IMR-90 (cell line): ENCODE measurements at regions of chr12 and their contacts with region 1.

Region 1: GRCh38 chr12:91058786-91059185 is 962 bp upstream of the KERA start:
- DNase-seq: no peak
- ATAC-seq: no peak
- H3K4me3 ChIP-seq: no peak overlapping the region
- H3K27ac ChIP-seq: no peak overlapping the region
- H3K4me1 ChIP-seq: no peaks in the 10 kb centered on the region
- H3K27me3 ChIP-seq: no peaks in the 10 kb centered on the region
- CTCF ChIP-seq: no peak
- POLR2A ChIP-seq: no peak
- RAD21 ChIP-seq: no peak

Region 2: DNA sequence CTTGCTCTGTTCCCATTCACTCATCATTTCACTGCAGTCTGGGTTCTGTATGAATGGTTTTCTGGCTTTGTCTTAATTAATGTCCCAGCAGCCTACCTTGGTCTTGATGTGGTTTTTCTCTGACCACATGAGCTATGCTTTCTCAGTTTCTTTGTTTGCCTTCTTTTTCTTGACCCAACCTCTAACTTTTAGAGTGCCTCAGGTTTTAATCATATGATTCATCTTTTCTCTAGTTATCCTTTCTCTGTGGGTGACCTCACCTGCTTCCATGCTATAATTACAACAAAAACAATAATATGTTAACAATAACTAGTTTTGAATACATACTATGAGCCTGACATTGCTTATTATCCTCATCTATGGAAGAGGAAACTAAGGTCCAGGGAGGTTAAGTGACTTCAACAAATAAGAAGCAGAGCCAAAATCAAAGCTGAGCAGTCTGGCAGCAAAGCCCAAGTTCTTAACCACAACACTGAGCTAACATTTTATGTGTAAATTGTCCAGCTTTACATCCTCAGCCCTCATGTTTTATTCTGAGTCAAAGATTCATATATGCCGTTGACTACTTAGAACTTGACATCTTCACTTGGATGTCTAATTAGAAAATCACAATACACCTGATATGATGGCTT is 49.4 kb before region 1 on chr12:
- CTCF ChIA-PET with region 1: no interaction called
- POLR2A ChIA-PET with region 1: no interaction called
- dilution Hi-C with region 1: no loop called
- in situ Hi-C with region 1: no loop called
- intact Hi-C with region 1: loop called (anchors 5 kb)
- DNase-seq: peak; percentile 41
- ATAC-seq: no peak
- H3K4me3 ChIP-seq: no peak overlapping the region
- H3K27ac ChIP-seq: no peak overlapping the region
- H3K4me1 ChIP-seq: no peaks in the 10 kb centered on the region
- H3K27me3 ChIP-seq: no peaks in the 10 kb centered on the region
- CTCF ChIP-seq: no peak
- POLR2A ChIP-seq: no peak
- RAD21 ChIP-seq: no peak

Region 3: DNA sequence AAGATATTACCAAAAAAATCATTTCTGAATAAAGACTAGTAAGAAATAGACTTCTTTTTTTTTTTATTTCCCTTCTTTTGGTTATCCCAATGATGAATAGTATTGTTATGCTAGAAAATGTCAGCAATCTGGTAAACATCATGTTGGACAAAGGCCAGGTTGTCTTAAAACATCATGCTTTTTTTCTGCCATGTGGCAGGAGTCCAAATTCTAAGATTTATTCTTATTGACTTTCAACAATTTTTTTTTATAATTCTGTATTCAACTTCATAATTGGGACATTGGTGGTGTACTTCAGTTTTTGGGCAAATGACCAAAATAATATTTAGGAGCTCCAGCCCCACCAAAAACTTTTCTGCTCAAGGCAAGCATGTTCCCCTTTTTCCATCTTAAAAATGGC is 113.3 kb after region 1 on chr12:
- CTCF ChIA-PET with region 1: no interaction called
- POLR2A ChIA-PET with region 1: no interaction called
- dilution Hi-C with region 1: no loop called
- in situ Hi-C with region 1: no loop called
- intact Hi-C with region 1: no loop called
- DNase-seq: no peak
- ATAC-seq: no peak
- H3K4me3 ChIP-seq: no peak overlapping the region
- H3K27ac ChIP-seq: peak overlapping the region; percentile 49; the same call in 1 of the 2 replicates
- H3K4me1 ChIP-seq: peaks cover 8% of the 10 kb centered on the region
- H3K27me3 ChIP-seq: no peaks in the 10 kb centered on the region
- CTCF ChIP-seq: no peak
- POLR2A ChIP-seq: no peak
- RAD21 ChIP-seq: no peak

Region 4: DNA sequence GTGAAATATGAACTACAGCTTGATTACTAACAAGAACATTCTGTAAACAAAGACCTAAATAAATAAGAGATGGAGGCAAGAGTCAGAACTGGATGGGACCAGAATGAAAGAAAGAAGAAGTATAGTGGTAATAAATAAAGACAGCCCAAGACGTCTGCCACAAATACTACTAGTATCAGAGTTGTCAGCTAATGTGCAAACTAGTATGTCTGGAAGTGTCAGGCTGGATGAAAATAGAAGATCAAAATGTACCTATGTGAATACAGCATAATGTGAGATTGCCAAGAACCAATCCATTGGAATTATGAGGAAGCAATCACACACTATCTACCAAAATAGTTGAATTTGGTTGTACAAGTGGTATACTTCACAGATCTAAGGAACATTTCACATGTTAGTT is 733.8 kb after region 1 on chr12:
- CTCF ChIA-PET with region 1: no interaction called
- POLR2A ChIA-PET with region 1: no interaction called
- dilution Hi-C with region 1: no loop called
- in situ Hi-C with region 1: no loop called
- intact Hi-C with region 1: no loop called
- DNase-seq: no peak
- ATAC-seq: no peak
- H3K4me3 ChIP-seq: no peak overlapping the region
- H3K27ac ChIP-seq: no peak overlapping the region
- H3K4me1 ChIP-seq: no peaks in the 10 kb centered on the region
- H3K27me3 ChIP-seq: no peaks in the 10 kb centered on the region; the same call in 1 of the 2 replicates
- CTCF ChIP-seq: no peak
- POLR2A ChIP-seq: no peak
- RAD21 ChIP-seq: no peak